GM12878 (cell line): ENCODE measurements at regions of chr15 and their contacts with region 1.

Region 1: DNA sequence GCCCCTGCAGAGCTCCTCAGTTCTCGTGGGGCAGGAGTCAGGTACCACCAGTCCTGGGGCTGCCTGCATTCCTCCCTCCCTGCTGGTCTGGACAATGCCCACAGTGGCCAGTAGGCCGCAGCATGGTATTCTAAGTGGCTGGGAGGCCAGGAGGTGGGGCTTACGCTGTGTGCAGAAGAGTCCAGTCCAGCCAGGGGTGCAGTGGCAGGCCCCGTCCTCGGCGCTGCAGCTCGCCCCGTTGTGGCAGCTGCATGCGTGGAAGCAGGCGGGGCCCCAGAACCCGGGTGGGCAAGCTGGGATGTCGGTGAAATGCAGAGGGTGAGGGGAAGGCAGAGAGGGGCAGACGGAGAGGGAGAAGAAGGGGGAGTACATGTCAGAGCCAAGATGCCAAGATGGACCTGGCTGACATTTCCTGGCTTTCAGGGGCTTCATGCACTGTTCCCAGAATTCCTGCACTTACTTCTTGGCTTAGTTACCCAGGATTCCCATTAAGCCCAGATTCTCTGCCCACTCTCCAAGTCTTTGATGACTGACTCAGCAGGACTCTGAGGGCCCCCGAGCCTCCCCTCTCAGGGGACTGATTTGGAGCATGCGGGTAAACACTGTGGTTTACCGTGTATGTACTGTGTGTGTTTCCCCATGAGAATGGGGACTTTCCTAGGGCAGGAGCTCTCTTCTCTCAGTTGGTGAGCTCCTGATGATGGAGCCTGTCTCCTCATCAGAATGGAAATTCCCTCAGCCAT is 47.5 kb downstream of the RAB11A start:
- DNase-seq: peak; percentile 84
- ATAC-seq: peak; percentile 85
- H3K4me3 ChIP-seq: 0 out of 2 replicates have a peak overlapping the region, but pooled peaks have one; percentile 13
- H3K27ac ChIP-seq: peak overlapping the region; percentile 85
- H3K4me1 ChIP-seq: peaks cover 67% of the 10 kb centered on the region
- H3K27me3 ChIP-seq: no peaks in the 10 kb centered on the region
- CTCF ChIP-seq: peak; percentile 69 to 97 (median 90); a peak in 5 of 6 replicates
- EP300 ChIP-seq: peak; percentile 79 to 90; a peak in 3 of 4 replicates
- POLR2A ChIP-seq: 0 out of 2 replicates have a peak, but pooled peaks have one; percentile 13
- RAD21 ChIP-seq: peak; percentile 90

Region 2: DNA sequence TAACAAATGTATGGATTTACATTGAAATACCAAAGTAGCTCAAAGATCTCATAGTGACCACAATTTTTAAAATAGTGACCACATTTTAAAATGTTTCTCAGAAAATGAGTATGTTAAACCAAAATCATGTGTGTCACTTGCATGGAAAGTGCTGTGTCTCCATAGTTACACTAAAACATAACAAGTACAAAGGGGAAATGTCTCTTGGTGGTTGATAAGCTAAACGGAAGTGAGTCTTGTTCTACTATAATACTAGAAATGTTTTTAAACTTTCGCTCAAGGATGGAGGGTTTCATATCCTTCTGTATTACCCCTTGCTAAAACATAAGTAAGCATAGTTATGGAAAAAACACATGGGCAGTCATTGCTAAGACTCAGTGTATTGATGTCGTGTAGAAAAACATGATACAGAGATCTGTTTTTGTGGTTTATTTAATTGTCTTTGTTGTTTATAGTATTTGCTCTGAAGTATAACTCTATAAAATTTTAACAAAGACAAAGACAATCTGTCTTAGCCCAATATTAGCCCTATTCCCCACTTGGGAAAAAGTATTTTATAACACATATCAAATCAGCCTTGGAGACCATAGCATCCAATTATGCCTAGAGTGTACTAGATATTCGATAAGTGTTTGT is 97.8 kb before region 1 on chr15:
- CTCF ChIA-PET with region 1: interaction called, 5 read pairs
- POLR2A ChIA-PET with region 1: interaction called, 8 read pairs
- RAD21 ChIA-PET with region 1: interaction called, 11 read pairs
- SMC1A ChIA-PET with region 1: interaction called, 11 read pairs
- in situ Hi-C with region 1: no loop called
- intact Hi-C with region 1: no loop called
- DNase-seq: peak; percentile 78
- ATAC-seq: peak; percentile 78
- H3K4me3 ChIP-seq: no peak overlapping the region
- H3K27ac ChIP-seq: peak overlapping the region; percentile 56
- H3K4me1 ChIP-seq: peaks cover 62% of the 10 kb centered on the region
- H3K27me3 ChIP-seq: no peaks in the 10 kb centered on the region
- CTCF ChIP-seq: no peak
- EP300 ChIP-seq: peak; percentile 100
- POLR2A ChIP-seq: no peak
- RAD21 ChIP-seq: no peak

Region 3: GRCh38 chr15:65902378-65902777 is 14.5 kb before region 1 on chr15:
- CTCF ChIA-PET with region 1: interaction called, 30 read pairs
- POLR2A ChIA-PET with region 1: interaction called, 23 read pairs
- RAD21 ChIA-PET with region 1: interaction called, 57 read pairs
- SMC1A ChIA-PET with region 1: interaction called, 70 read pairs
- in situ Hi-C with region 1: no loop called
- intact Hi-C with region 1: no loop called
- DNase-seq: peak; percentile 57
- ATAC-seq: peak; percentile 93
- H3K4me3 ChIP-seq: no peak overlapping the region
- H3K27ac ChIP-seq: peak overlapping the region; percentile 63
- H3K4me1 ChIP-seq: peaks cover 27% of the 10 kb centered on the region
- H3K27me3 ChIP-seq: no peaks in the 10 kb centered on the region
- CTCF ChIP-seq: no peak
- EP300 ChIP-seq: no peak
- POLR2A ChIP-seq: no peak
- RAD21 ChIP-seq: no peak

Region 4: DNA sequence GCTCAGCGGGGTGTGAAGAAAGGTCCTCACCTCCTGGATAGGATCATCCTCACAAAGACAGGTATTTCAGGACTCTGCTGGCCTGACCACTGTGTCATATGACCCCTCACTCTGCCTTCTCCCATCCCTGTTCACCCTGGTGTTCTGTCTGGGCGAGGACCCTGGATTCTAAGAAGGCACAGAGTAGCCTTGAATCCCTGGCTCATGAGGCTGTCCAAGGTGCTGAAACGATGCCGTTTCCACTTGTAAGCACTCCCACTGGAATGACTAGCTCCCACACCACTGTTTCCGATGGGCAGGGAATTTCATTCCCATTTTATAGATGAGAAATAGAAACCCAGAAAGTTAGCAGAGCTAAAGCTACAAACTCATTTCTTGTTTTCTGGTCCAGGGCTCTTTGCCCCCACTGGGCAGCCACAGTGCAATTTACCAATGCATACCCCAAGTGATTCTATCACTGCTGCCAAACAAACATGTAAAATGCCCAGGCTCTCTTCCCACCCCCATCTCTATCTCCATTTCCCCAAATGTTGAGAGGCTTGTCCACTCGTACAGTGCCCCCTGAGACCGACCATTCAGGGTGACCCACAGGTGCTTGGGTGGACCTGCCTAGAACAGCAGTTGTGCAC is 35.7 kb after region 1 on chr15:
- CTCF ChIA-PET with region 1: interaction called, 7 read pairs
- POLR2A ChIA-PET with region 1: no interaction called
- RAD21 ChIA-PET with region 1: interaction called, 12 read pairs
- SMC1A ChIA-PET with region 1: interaction called, 13 read pairs
- in situ Hi-C with region 1: no loop called
- intact Hi-C with region 1: no loop called
- DNase-seq: no peak
- ATAC-seq: peak; percentile 36; the same call in 1 of the 3 replicates
- H3K4me3 ChIP-seq: no peak overlapping the region
- H3K27ac ChIP-seq: no peak overlapping the region
- H3K4me1 ChIP-seq: no peaks in the 10 kb centered on the region
- H3K27me3 ChIP-seq: no peaks in the 10 kb centered on the region
- CTCF ChIP-seq: no peak
- EP300 ChIP-seq: no peak
- POLR2A ChIP-seq: no peak
- RAD21 ChIP-seq: no peak

Region 5: GRCh38 chr15:66004618-66005262 is 87.9 kb after region 1 on chr15:
- CTCF ChIA-PET with region 1: interaction called, 3 read pairs
- POLR2A ChIA-PET with region 1: no interaction called
- RAD21 ChIA-PET with region 1: interaction called, 3 read pairs
- SMC1A ChIA-PET with region 1: interaction called, 6 read pairs
- in situ Hi-C with region 1: no loop called
- intact Hi-C with region 1: loop called (anchors 2 kb)
- DNase-seq: no peak
- ATAC-seq: no peak
- H3K4me3 ChIP-seq: no peak overlapping the region
- H3K27ac ChIP-seq: no peak overlapping the region
- H3K4me1 ChIP-seq: no peaks in the 10 kb centered on the region
- H3K27me3 ChIP-seq: 0 out of 4 replicates have a peak, but pooled peaks cover 0 to 1% of the 10 kb centered on the region in 2 experiments
- CTCF ChIP-seq: no peak
- EP300 ChIP-seq: no peak
- POLR2A ChIP-seq: no peak
- RAD21 ChIP-seq: no peak

Region 6: DNA sequence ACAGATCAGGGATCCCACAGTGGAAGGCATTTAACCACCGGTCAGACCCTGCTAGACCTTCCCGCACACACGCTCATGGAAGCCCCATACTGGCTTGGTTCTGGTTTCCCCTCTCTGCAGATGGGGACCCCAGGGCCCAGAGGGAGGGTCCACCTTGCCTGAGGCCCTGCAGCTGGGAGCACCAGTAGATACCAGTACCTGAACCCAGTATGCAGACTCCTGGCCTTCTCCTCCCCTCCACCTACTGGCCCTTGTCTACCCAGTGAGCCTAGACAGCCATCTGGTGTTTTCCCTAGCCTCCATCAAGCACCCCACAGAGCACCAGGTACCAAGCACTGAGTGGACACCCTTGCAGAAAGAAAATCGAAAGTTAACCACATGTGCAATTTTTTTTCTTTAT is 271.6 kb after region 1 on chr15:
- CTCF ChIA-PET with region 1: interaction called, 22 read pairs
- POLR2A ChIA-PET with region 1: no interaction called
- RAD21 ChIA-PET with region 1: interaction called, 18 read pairs
- SMC1A ChIA-PET with region 1: interaction called, 7 read pairs
- in situ Hi-C with region 1: no loop called
- intact Hi-C with region 1: loop called (anchors 1 kb)
- DNase-seq: no peak
- ATAC-seq: peak; percentile 50; the same call in 1 of the 3 replicates
- H3K4me3 ChIP-seq: no peak overlapping the region
- H3K27ac ChIP-seq: no peak overlapping the region
- H3K4me1 ChIP-seq: no peaks in the 10 kb centered on the region
- H3K27me3 ChIP-seq: no peaks in the 10 kb centered on the region; a peak in 1 of 4 replicates
- CTCF ChIP-seq: peak in 1 of 3 experiments; percentile 30; a peak in 2 of 6 replicates
- EP300 ChIP-seq: no peak
- POLR2A ChIP-seq: no peak
- RAD21 ChIP-seq: peak; percentile 51